ENCODE measurements at regions of chr20 and their contacts with region 1.

Region 1: DNA sequence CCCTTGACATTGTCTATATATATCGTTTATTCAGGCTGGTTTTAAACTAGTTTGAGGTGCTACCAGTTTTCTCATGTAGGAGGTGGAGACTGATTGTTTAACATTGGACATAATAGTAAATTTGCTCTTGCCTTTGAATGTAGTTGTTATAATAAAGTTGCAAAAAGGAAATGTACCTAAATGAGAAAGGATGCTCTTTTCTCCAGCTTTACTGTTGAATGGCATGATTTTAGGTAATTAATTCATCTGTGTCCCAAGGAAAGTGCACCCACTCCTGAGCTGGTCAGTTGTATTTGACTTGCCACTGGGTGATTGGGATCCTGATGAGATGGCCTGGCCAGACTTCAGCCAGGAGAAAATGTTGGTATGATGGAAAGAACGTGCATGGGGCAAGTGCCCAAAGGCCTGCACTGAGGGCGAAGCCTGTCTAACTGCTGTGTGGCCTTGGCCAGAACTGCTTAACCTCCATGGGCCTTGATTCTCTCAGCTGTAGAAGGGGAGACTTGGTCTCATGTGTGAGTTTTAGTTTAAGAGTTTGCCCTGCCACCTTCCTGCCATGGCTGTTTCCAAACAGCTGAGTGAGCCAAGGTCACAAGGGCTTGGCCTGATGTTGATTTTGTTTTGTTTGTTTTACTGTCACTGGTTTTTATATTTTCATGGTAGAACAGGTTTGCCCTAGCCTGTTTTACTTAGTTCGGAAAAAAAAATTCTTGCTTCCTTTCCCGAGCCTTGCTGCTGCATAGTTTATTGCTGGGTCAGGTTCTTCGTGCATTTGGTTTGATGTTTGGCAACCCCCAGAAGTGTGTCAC is 35.2 kb downstream of the DSTN start:
- DNase-seq: peak; percentile 37 to 60
- H3K4me3 ChIP-seq: no peak overlapping the region
- H3K4me3 Mint-ChIP-seq: peak overlapping the region; percentile 19
- H3K27ac Mint-ChIP-seq: peak overlapping the region; percentile 40
- H3K4me1 ChIP-seq: peaks cover 36% of the 10 kb centered on the region
- H3K4me1 Mint-ChIP-seq: peaks cover 37% of the 10 kb centered on the region
- H3K27me3 ChIP-seq: no peaks in the 10 kb centered on the region
- H3K27me3 Mint-ChIP-seq: no peaks in the 10 kb centered on the region
- CTCF ChIP-seq: no peak

Region 2: GRCh38 chr20:17442588-17442987 is 162.5 kb before region 1 on chr20:
- CTCF ChIA-PET with region 1: no interaction called
- POLR2A ChIA-PET with region 1: no interaction called
- intact Hi-C with region 1: loop called (anchors 10 kb)
- DNase-seq: peak in 1 of 2 experiments; percentile 27
- H3K4me3 ChIP-seq: no peak overlapping the region
- H3K4me3 Mint-ChIP-seq: no peak overlapping the region
- H3K27ac Mint-ChIP-seq: no peak overlapping the region
- H3K4me1 ChIP-seq: peaks cover 31% of the 10 kb centered on the region
- H3K4me1 Mint-ChIP-seq: peaks cover 23% of the 10 kb centered on the region
- H3K27me3 ChIP-seq: no peaks in the 10 kb centered on the region
- H3K27me3 Mint-ChIP-seq: no peaks in the 10 kb centered on the region
- CTCF ChIP-seq: peak in 1 of 2 experiments; percentile 18

Region 3: GRCh38 chr20:17594443-17594842 is 10.6 kb before region 1 on chr20:
- CTCF ChIA-PET with region 1: interaction called, 3 read pairs
- POLR2A ChIA-PET with region 1: no interaction called
- intact Hi-C with region 1: loop called (anchors 1 kb)
- DNase-seq: peak; percentile 84 to 88
- H3K4me3 ChIP-seq: no peak overlapping the region
- H3K4me3 Mint-ChIP-seq: peak overlapping the region; percentile 46
- H3K27ac Mint-ChIP-seq: peak overlapping the region; percentile 46
- H3K4me1 ChIP-seq: peaks cover 43% of the 10 kb centered on the region
- H3K4me1 Mint-ChIP-seq: peaks cover 43% of the 10 kb centered on the region
- H3K27me3 ChIP-seq: no peaks in the 10 kb centered on the region
- H3K27me3 Mint-ChIP-seq: no peaks in the 10 kb centered on the region
- CTCF ChIP-seq: no peak

Measured in Caco-2 (cell line).